Activated CD8-positive, alpha-beta T cell treated with anti-CD3 and anti-CD28 coated beads, Interleukin-2, amount 10 ng/mL, durations not matched to agents 7 days and 5 days (primary cell): ENCODE measurements at regions of chr3 and their contacts with region 1.

Region 1: GRCh38 chr3:124761250-124761796 is 31.1 kb downstream of the UMPS start:
- DNase-seq: peak; percentile 85
- ATAC-seq: peak; percentile 79
- H3K4me3 Mint-ChIP-seq: peak overlapping the region; percentile 40
- H3K27ac Mint-ChIP-seq: peak overlapping the region; percentile 13
- H3K4me1 Mint-ChIP-seq: peaks cover 6% of the 10 kb centered on the region
- H3K27me3 Mint-ChIP-seq: no peaks in the 10 kb centered on the region

Region 2: GRCh38 chr3:124777762-124778470 is 16.6 kb after region 1 on chr3:
- CTCF ChIA-PET with region 1: interaction called, 14 read pairs
- POLR2A ChIA-PET with region 1: no interaction called
- DNase-seq: no peak
- ATAC-seq: no peak
- H3K4me3 Mint-ChIP-seq: no peak overlapping the region
- H3K27ac Mint-ChIP-seq: no peak overlapping the region
- H3K4me1 Mint-ChIP-seq: peaks cover 9% of the 10 kb centered on the region
- H3K27me3 Mint-ChIP-seq: peaks cover 11% of the 10 kb centered on the region

Region 3: GRCh38 chr3:124845406-124845805 is 84.1 kb after region 1 on chr3:
- CTCF ChIA-PET with region 1: no interaction called
- POLR2A ChIA-PET with region 1: no interaction called
- DNase-seq: no peak
- ATAC-seq: no peak
- H3K4me3 Mint-ChIP-seq: no peak overlapping the region
- H3K27ac Mint-ChIP-seq: no peak overlapping the region
- H3K4me1 Mint-ChIP-seq: no peaks in the 10 kb centered on the region
- H3K27me3 Mint-ChIP-seq: peaks cover 13% of the 10 kb centered on the region

Region 4: DNA sequence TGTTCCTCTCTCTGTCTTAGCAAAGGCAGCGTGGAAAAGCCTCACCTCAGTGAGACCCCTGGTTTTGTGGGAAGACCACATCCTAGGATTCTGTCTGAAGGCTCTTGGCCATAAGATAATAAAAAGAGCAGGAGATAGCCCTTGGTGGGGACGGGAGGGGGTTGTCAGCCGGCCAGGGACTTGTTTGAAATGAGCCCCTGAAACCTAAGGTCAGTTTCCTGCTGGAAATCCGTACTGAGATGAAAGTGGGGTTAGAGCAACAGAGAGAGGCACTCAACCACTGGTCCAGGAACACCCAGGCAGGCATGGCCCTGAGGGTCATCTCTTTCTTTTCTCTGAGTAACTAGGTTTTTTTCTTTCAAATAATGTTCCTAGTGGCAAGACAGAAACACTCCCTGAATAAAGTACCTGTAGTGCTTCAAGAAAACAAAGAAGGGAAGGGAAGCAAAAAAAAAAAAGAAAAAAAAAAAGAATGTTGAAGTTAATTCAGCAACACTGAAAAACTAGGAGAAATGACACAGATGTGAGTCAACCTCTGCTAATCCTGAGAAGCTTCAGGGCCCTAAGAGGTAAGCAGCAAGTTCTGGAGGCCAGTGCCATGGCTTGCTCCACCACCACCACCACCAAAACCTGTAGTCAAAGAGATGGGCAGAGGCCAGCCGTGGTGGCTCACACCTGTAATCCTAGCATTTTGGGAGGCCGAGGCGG is 122.6 kb after region 1 on chr3:
- CTCF ChIA-PET with region 1: interaction called, 11 read pairs
- POLR2A ChIA-PET with region 1: no interaction called
- DNase-seq: no peak
- ATAC-seq: no peak
- H3K4me3 Mint-ChIP-seq: no peak overlapping the region
- H3K27ac Mint-ChIP-seq: no peak overlapping the region
- H3K4me1 Mint-ChIP-seq: peaks cover 6% of the 10 kb centered on the region
- H3K27me3 Mint-ChIP-seq: peaks cover 58% of the 10 kb centered on the region

Region 5: GRCh38 chr3:124905849-124906248 is 144.5 kb after region 1 on chr3:
- CTCF ChIA-PET with region 1: interaction called, 194 read pairs
- POLR2A ChIA-PET with region 1: interaction called, 9 read pairs
- DNase-seq: no peak
- ATAC-seq: no peak
- H3K4me3 Mint-ChIP-seq: no peak overlapping the region
- H3K27ac Mint-ChIP-seq: no peak overlapping the region
- H3K4me1 Mint-ChIP-seq: peaks cover 7% of the 10 kb centered on the region
- H3K27me3 Mint-ChIP-seq: peaks cover 25% of the 10 kb centered on the region